ENCODE measurements at regions of chr2 and their contacts with region 1.

Region 1: GRCh38 chr2:63059793-63060471 is 9.3 kb downstream of the OTX1 start:
- DNase-seq: no peak
- ATAC-seq: peak; percentile 23
- H3K4me3 ChIP-seq: peak overlapping the region; percentile 30 to 45
- H3K27ac ChIP-seq: no peak overlapping the region
- H3K4me1 ChIP-seq: no peaks in the 10 kb centered on the region
- H3K27me3 ChIP-seq: peaks cover 6% of the 10 kb centered on the region
- CTCF ChIP-seq: no peak

Region 2: GRCh38 chr2:63023444-63023843 is 36.5 kb before region 1 on chr2:
- CTCF ChIA-PET with region 1: no interaction called
- POLR2A ChIA-PET with region 1: interaction called, 16 read pairs
- in situ Hi-C with region 1: no loop called
- intact Hi-C with region 1: no loop called
- DNase-seq: peak; percentile 18
- ATAC-seq: peak; percentile 63; the same call in 1 of the 2 replicates
- H3K4me3 ChIP-seq: no peak overlapping the region
- H3K27ac ChIP-seq: no peak overlapping the region
- H3K4me1 ChIP-seq: no peaks in the 10 kb centered on the region
- H3K27me3 ChIP-seq: no peaks in the 10 kb centered on the region
- CTCF ChIP-seq: peak; percentile 65; the same call in 1 of the 2 replicates